ENCODE measurements at regions of chr17 and their contacts with region 1.

Region 1: GRCh38 chr17:40647624-40648383 is at the start of gene SMARCE1:
- DNase-seq: peak; percentile 71
- H3K4me3 Mint-ChIP-seq: peak within 1 kb of the TSS; percentile 92
- H3K27ac Mint-ChIP-seq: peak within 1 kb of the TSS; percentile 97
- H3K4me1 Mint-ChIP-seq: peaks cover 41% of the 10 kb centered on the region
- H3K27me3 Mint-ChIP-seq: no peaks in the 10 kb centered on the region
- total RNA-seq, gene SMARCE1: 103 to 104 TPM

Region 2: GRCh38 chr17:40588552-40588951 is 59.3 kb before region 1 on chr17:
- CTCF ChIA-PET with region 1: no interaction called
- POLR2A ChIA-PET with region 1: no interaction called
- intact Hi-C with region 1: no loop called
- DNase-seq: no peak
- H3K4me3 Mint-ChIP-seq: no peak overlapping the region
- H3K27ac Mint-ChIP-seq: peak overlapping the region; percentile 15
- H3K4me1 Mint-ChIP-seq: peaks cover 61% of the 10 kb centered on the region
- H3K27me3 Mint-ChIP-seq: no peaks in the 10 kb centered on the region

Region 3: GRCh38 chr17:40622509-40622928 is 25.3 kb before region 1 on chr17:
- CTCF ChIA-PET with region 1: interaction called, 16 read pairs
- POLR2A ChIA-PET with region 1: interaction called, 13 read pairs
- intact Hi-C with region 1: loop called (anchors 2 kb)
- DNase-seq: peak; percentile 38
- H3K4me3 Mint-ChIP-seq: no peak overlapping the region
- H3K27ac Mint-ChIP-seq: no peak overlapping the region
- H3K4me1 Mint-ChIP-seq: peaks cover 60% of the 10 kb centered on the region
- H3K27me3 Mint-ChIP-seq: no peaks in the 10 kb centered on the region

Region 4: DNA sequence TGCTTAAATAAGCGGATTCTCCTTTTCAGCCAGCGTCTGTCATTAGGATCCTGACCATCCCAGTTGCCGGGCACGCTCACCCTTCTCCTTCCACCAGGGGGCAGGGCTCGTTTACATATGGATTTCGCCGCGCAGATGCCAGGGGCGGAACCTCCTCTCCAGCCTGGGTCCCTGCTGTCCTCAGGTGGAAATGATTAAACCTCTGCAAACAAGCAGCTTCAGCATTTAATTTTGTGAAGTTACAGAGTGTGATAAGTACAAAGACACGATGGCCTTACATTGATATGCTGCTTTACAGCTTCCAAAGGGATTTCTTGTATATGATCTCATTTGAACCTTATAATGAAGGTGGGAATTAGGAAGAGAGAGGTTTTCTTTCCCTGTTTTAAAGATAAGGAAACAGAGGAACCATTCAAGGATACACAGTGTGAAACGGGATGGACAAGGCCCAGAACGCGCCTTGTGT is 155.8 kb after region 1 on chr17:
- CTCF ChIA-PET with region 1: no interaction called
- POLR2A ChIA-PET with region 1: no interaction called
- intact Hi-C with region 1: no loop called
- DNase-seq: peak; percentile 86
- H3K4me3 Mint-ChIP-seq: no peak overlapping the region
- H3K27ac Mint-ChIP-seq: no peak overlapping the region
- H3K4me1 Mint-ChIP-seq: peaks cover 2% of the 10 kb centered on the region
- H3K27me3 Mint-ChIP-seq: peaks cover 36% of the 10 kb centered on the region

Region 5: DNA sequence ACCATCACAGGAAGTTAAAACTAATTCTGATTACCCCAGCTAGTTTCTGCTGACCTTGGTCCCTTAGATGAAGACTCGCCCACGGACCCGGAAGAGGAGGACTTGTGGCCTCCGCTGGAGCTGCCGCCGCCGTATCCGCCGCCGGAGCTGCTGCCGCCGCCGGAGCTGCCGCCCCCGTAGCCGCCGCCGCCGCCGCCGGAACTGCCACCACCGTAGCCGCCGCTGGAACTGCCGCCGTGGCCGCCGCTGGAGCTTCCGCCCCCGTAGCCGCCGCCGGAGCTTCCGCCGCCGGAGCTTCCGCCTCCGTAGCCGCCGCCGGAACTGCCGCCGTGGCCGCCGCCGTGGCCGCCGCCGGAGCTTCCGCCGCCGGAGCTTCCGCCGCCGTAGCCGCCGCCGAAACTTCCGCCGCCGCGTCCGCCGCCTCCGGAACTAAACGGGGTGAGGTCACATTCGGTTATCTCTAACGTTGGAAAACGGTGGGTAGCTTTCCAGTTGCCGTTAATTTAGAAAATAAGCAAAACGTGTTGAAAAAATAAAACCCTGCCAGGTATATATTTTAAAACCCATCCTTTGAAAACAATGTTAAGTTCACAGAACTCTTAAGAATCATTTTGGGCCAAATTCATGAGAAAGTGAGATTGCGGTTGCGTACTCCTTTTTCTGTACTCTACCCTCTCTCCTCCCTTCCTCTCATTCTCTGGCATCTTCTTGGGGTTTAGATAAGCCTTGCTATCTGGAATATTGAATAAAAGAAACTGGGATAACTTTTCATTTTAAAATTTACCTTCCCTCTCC is 171.1 kb after region 1 on chr17:
- CTCF ChIA-PET with region 1: no interaction called
- POLR2A ChIA-PET with region 1: interaction called, 12 read pairs
- intact Hi-C with region 1: no loop called
- DNase-seq: peak; percentile 91
- H3K4me3 Mint-ChIP-seq: peak overlapping the region; percentile 87
- H3K27ac Mint-ChIP-seq: peak overlapping the region; percentile 94
- H3K4me1 Mint-ChIP-seq: peaks cover 18% of the 10 kb centered on the region
- H3K27me3 Mint-ChIP-seq: peaks cover 7% of the 10 kb centered on the region

Region 6: GRCh38 chr17:41026715-41027471 is 379.1 kb after region 1 on chr17 and contains the start of gene KRTAP1-5:
- CTCF ChIA-PET with region 1: no interaction called
- POLR2A ChIA-PET with region 1: no interaction called
- intact Hi-C with region 1: no loop called
- DNase-seq: no peak
- H3K4me3 Mint-ChIP-seq: no peak within 1 kb of the TSS
- H3K27ac Mint-ChIP-seq: no peak within 1 kb of the TSS
- H3K4me1 Mint-ChIP-seq: no peaks in the 10 kb centered on the region
- H3K27me3 Mint-ChIP-seq: peaks cover 19% of the 10 kb centered on the region
- total RNA-seq, gene KRTAP1-5: not detected

Measured in activated CD4-positive, alpha-beta memory T cell treated with anti-CD3 and anti-CD28 coated beads for 36 hours (primary cell).